Naive thymus-derived CD4-positive, alpha-beta T cell (primary cell): ENCODE measurements at regions of chr7 and their contacts with region 1.

Region 1: DNA sequence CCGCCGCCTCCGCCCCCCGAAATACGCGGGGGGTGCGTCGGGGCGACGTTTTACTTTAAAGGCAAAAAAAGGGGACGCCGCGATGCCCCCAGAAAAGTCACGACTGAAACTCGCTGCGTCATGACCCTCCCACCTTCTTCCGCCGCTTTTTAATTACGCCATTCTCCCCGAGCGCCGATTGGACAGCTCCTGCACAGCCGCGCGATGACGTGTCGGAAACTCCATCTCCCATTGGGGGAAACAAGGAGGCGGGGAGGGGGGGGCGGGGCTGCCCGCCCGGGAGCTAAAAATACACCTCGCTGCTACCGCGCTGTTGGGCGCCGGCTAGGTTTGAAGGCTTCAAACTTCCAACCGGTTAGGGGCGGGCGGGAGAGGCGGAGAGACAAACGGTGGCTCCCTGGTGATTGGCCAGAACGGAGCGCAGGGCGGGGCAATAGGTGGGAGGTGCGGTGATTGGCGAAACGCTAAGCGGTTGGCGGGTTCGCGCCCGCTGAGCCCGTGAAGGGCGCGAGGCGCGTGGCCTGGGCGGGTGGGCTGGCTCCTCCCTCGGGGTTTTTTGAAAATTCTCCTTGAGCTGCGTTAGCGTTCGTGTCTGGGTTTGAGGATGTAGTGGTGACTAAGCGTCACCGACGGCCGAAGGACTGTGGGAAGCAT is at the start of gene RHEB:
- DNase-seq: peak; percentile 93 to 99 (median 98)
- ATAC-seq: peak; percentile 91
- H3K4me3 ChIP-seq: peak within 1 kb of the TSS; percentile 91
- H3K4me3 Mint-ChIP-seq: peak within 1 kb of the TSS; percentile 87 to 97 (median 94)
- H3K27ac ChIP-seq: peak within 1 kb of the TSS; percentile 88
- H3K27ac Mint-ChIP-seq: peak within 1 kb of the TSS; percentile 94 to 99 (median 98)
- H3K4me1 ChIP-seq: peaks cover 24 to 26% of the 10 kb centered on the region in 2 donors
- H3K4me1 Mint-ChIP-seq: peaks cover 32 to 44% (median 36%) of the 10 kb centered on the region in 7 donors
- H3K27me3 ChIP-seq: no peaks in the 10 kb centered on the region
- H3K27me3 Mint-ChIP-seq: peaks cover 0 to 12% (median 0%) of the 10 kb centered on the region in 5 donors
- total RNA-seq, gene RHEB: 31.2 to 62.6 (median 40.2) TPM

Region 2: DNA sequence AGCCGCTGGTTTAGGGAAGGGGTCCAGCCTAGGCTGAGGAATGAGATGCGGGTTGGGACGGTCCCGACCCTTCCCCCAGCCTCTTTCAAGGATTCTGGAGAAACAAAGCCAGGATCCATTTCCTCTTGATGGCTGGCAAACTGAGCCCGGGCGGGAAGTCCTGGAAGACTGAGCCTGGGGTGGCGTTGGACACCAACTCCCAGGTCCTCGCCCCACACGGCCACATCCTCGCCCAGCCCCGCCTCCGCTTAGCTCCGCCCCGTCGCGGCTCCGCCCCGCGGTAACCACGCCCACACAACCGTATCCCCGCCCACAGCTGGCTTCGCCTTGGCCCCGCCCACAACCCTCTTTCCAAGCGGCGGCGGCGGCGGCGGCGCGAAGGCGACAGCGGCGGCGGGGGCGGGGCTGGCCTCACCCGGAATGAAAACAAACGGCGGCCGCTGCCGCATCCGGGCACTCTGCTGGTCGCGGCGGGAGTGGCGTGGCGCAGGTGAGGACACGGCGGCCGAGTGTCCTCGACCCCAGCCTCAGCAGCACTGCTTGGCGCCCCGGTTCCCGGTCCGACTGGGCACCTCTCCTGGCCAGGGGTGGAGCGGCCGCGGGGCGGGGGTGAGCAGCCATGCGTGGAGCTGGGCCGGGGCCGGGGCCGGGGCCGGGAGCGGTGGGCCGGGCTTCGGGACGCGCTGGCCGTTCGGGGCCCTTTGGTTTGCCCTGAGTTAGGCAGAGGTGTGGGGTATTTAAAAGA is 178.4 kb before region 1 on chr7 and contains the start of gene NUB1:
- CTCF ChIA-PET with region 1: no interaction called
- POLR2A ChIA-PET with region 1: no interaction called
- intact Hi-C with region 1: loop called in 1 of 2 experiments (anchors 2 kb)
- DNase-seq: peak; percentile 79 to 99 (median 90)
- ATAC-seq: peak; percentile 98
- H3K4me3 ChIP-seq: peak within 1 kb of the TSS; percentile 84
- H3K4me3 Mint-ChIP-seq: peak within 1 kb of the TSS; percentile 84 to 91 (median 87)
- H3K27ac ChIP-seq: peak within 1 kb of the TSS; percentile 88
- H3K27ac Mint-ChIP-seq: peak within 1 kb of the TSS; percentile 83 to 96 (median 90)
- H3K4me1 ChIP-seq: peaks cover 19 to 21% of the 10 kb centered on the region in 2 donors
- H3K4me1 Mint-ChIP-seq: peaks cover 10 to 44% (median 33%) of the 10 kb centered on the region in 7 donors
- H3K27me3 ChIP-seq: no peaks in the 10 kb centered on the region
- H3K27me3 Mint-ChIP-seq: no peaks in the 10 kb centered on the region
- total RNA-seq, gene NUB1: 75.1 to 116 (median 82.0) TPM

Region 3: GRCh38 chr7:151481650-151482505 is 38.0 kb before region 1 on chr7:
- CTCF ChIA-PET with region 1: no interaction called
- POLR2A ChIA-PET with region 1: interaction called, 3 read pairs
- intact Hi-C with region 1: loop called in 1 of 2 experiments (anchors 2 kb)
- DNase-seq: no peak
- ATAC-seq: no peak
- H3K4me3 ChIP-seq: no peak overlapping the region
- H3K4me3 Mint-ChIP-seq: no peak overlapping the region
- H3K27ac ChIP-seq: no peak overlapping the region
- H3K27ac Mint-ChIP-seq: peak overlapping the region in 2 of 9 donors; percentile 15 to 44
- H3K4me1 ChIP-seq: no peaks in the 10 kb centered on the region
- H3K4me1 Mint-ChIP-seq: peaks cover 9 to 35% (median 20%) of the 10 kb centered on the region in 7 donors
- H3K27me3 ChIP-seq: no peaks in the 10 kb centered on the region
- H3K27me3 Mint-ChIP-seq: no peaks in the 10 kb centered on the region

Region 4: GRCh38 chr7:151631968-151632749 is 112.3 kb after region 1 on chr7:
- CTCF ChIA-PET with region 1: interaction called, 6 read pairs
- POLR2A ChIA-PET with region 1: interaction called, 11 read pairs
- intact Hi-C with region 1: loop called (anchors 1 kb)
- DNase-seq: peak; percentile 81 to 95 (median 87)
- ATAC-seq: peak; percentile 93
- H3K4me3 ChIP-seq: peak overlapping the region; percentile 80
- H3K4me3 Mint-ChIP-seq: peak overlapping the region; percentile 89 to 99 (median 96)
- H3K27ac ChIP-seq: peak overlapping the region; percentile 81
- H3K27ac Mint-ChIP-seq: peak overlapping the region; percentile 90 to 97 (median 95)
- H3K4me1 ChIP-seq: peaks cover 12% of the 10 kb centered on the region in 2 donors
- H3K4me1 Mint-ChIP-seq: peaks cover 14 to 48% (median 30%) of the 10 kb centered on the region in 7 donors
- H3K27me3 ChIP-seq: no peaks in the 10 kb centered on the region
- H3K27me3 Mint-ChIP-seq: no peaks in the 10 kb centered on the region

Region 5: DNA sequence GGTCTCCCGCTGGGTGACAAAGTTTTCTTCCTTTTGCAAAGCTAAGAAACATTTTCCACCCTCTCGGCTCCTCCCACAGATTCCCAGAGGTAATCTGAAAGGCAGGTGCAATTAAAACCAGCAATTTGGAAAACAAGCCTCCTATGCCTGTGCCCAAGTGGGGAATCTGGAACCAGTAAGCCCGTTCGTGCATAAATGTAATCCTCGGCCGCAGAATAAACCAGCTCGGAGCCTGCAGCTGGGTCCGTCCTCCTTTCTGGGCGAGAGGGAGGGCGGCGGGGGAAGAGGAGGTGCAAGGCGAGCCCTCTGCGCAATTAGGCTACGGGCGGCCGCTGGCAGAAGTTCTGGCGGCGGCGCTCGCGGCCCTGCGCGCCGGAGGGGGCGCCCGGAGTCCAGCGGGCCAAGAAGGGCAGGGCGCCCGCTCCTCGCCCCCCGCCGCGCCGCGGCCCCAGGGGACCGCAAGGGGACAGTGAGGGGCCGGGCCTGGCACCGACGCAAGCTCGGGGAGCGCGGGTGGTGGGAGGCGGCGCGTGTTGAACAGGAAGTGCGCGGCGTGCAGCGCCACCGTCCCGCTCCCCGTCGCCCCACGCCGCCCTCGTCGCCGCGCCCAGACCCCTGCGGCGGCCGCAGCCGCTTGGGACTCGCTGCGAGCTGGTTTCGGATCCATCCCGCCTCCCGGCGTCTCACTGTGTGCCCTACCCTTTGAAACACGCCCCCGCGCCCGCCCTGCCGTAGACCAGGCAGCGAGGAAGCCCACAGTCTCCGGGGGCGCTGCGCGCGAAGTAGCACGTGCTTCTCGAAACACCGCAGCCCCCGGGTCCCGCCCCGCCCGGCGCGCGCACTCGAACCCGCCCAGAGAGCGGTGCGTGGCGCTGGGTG is 357.2 kb after region 1 on chr7 and contains the start of gene PRKAG2:
- CTCF ChIA-PET with region 1: no interaction called
- POLR2A ChIA-PET with region 1: interaction called, 7 read pairs
- intact Hi-C with region 1: loop called in 1 of 2 experiments (anchors 1 kb)
- DNase-seq: peak; percentile 58 to 81 (median 76)
- ATAC-seq: peak; percentile 65
- H3K4me3 ChIP-seq: peak within 1 kb of the TSS; percentile 99
- H3K4me3 Mint-ChIP-seq: peak within 1 kb of the TSS; percentile 93 to 98 (median 96)
- H3K27ac ChIP-seq: peak within 1 kb of the TSS; percentile 87
- H3K27ac Mint-ChIP-seq: peak within 1 kb of the TSS; percentile 84 to 96 (median 91)
- H3K4me1 ChIP-seq: peaks cover 7 to 15% of the 10 kb centered on the region in 2 donors
- H3K4me1 Mint-ChIP-seq: peaks cover 6 to 33% (median 20%) of the 10 kb centered on the region in 7 donors
- H3K27me3 ChIP-seq: no peaks in the 10 kb centered on the region
- H3K27me3 Mint-ChIP-seq: peaks cover 0 to 41% (median 0%) of the 10 kb centered on the region in 5 donors
- total RNA-seq, gene PRKAG2: 15.0 to 74.4 (median 66.1) TPM

Region 6: DNA sequence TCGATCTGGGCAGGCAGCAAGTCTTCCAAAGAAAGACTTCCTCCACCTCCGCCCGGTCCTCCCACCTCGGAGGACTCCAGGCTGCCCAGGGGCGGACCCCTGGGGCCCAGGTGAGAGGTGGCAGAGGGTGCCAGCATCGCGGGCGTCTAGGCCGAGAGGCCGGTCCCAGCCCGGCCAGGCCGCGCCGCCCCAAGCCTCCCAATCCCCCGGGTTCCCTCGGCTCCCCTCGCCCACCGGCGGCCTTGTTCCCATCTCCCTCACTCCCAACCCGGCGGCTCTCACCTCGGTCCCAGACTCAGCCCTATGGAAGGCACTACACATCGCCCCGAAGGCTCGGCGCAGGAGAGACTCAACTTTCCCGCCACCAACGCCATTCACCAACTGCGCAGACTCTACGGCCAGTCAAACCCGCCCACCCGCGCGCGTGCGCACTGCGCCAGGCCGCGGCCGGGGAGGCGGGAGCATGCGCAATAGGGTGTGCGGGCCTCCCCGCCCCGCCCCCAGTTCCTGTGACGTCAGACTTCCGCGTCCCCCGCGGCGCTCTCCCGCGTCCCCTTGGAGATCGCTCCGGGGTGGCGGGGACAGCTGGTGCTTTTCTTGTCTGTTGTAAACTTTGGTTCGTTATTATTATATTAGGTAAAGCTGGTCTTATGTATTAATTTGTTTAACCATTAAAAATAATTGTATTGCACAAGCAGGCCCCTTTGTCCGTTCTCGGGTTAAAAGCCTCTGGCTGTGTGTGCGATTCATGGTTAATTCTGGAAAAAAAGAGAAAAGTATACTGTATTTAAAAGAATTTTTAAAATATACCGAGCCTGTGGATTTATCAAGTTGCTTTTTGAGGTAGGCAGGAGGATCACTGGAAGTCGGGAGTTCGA is 1156.1 kb after region 1 on chr7 and contains the start of gene XRCC2:
- CTCF ChIA-PET with region 1: no interaction called
- POLR2A ChIA-PET with region 1: no interaction called
- intact Hi-C with region 1: loop called in 1 of 2 experiments (anchors 5 kb)
- DNase-seq: peak; percentile 85 to 100 (median 97)
- ATAC-seq: peak; percentile 95
- H3K4me3 ChIP-seq: peak within 1 kb of the TSS; percentile 91
- H3K4me3 Mint-ChIP-seq: peak within 1 kb of the TSS; percentile 88 to 99 (median 94)
- H3K27ac ChIP-seq: peak within 1 kb of the TSS; percentile 87
- H3K27ac Mint-ChIP-seq: peak within 1 kb of the TSS; percentile 75 to 98 (median 91)
- H3K4me1 ChIP-seq: peaks cover 5 to 8% of the 10 kb centered on the region in 2 donors
- H3K4me1 Mint-ChIP-seq: peaks cover 9 to 22% (median 12%) of the 10 kb centered on the region in 7 donors
- H3K27me3 ChIP-seq: no peaks in the 10 kb centered on the region
- H3K27me3 Mint-ChIP-seq: no peaks in the 10 kb centered on the region
- total RNA-seq, gene XRCC2: 0.48 to 13.8 (median 1.2) TPM